Vagina (tissue), 2 donors: ENCODE measurements at regions of chr15 and their contacts with region 1.

Region 1: GRCh38 chr15:101486696-101487459 is 2.6 kb downstream of the PCSK6 start:
- DNase-seq: no peak
- H3K4me3 ChIP-seq: no peak overlapping the region
- H3K27ac ChIP-seq: no peak overlapping the region
- H3K4me1 ChIP-seq: no peaks in the 10 kb centered on the region
- H3K27me3 ChIP-seq: no peaks in the 10 kb centered on the region
- CTCF ChIP-seq: no peak
- POLR2A ChIP-seq: no peak

Region 2: DNA sequence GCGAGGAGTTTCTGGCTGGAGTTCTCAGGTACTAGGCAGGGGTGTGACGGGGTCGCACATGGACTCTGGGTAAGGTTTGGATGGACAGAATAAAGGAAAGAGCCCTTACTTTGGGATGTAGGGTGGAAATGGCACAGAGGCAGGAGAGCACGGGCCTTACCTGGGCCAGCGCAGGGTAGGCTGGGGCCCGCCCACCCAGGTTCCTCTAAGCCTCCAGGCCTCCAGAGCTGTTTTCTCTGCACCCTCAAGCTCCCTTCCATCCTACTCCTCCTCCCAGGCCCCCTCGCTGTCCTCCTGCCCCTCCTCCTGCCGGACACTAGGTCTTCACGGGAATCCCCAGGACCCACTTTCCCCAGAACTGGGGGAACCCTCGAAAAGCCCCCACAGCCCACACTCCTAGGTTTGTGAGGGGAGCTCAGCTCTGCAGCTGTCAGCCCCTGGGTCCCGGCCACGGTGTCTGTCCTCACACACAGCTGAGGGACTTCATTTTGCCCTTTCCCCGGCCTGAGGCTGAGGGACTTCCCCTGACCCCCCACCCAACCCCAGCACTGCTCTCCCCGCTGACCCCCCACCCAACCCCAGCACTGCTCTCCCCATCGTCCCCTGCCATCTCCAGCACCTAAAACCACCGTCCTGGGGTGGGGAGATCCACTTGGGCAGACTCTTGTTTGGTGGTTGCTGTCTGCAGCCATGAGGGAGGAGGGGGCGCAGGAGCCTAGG is 55.6 kb after region 1 on chr15:
- intact Hi-C with region 1: loop called (anchors 2 kb)
- DNase-seq: no peak
- H3K4me3 ChIP-seq: no peak overlapping the region
- H3K27ac ChIP-seq: no peak overlapping the region
- H3K4me1 ChIP-seq: no peaks in the 10 kb centered on the region
- H3K27me3 ChIP-seq: no peaks in the 10 kb centered on the region
- CTCF ChIP-seq: no peak
- POLR2A ChIP-seq: no peak